ENCODE measurements at regions of chr12 and their contacts with region 1.

Region 1: GRCh38 chr12:12384571-12385340 is 27.9 kb downstream of the BORCS5 start:
- DNase-seq: peak; percentile 76
- ATAC-seq: peak; percentile 88
- H3K4me3 Mint-ChIP-seq: no peak overlapping the region
- H3K27ac Mint-ChIP-seq: peak overlapping the region; percentile 77
- H3K4me1 Mint-ChIP-seq: peaks cover 46% of the 10 kb centered on the region
- H3K27me3 Mint-ChIP-seq: no peaks in the 10 kb centered on the region

Region 2: DNA sequence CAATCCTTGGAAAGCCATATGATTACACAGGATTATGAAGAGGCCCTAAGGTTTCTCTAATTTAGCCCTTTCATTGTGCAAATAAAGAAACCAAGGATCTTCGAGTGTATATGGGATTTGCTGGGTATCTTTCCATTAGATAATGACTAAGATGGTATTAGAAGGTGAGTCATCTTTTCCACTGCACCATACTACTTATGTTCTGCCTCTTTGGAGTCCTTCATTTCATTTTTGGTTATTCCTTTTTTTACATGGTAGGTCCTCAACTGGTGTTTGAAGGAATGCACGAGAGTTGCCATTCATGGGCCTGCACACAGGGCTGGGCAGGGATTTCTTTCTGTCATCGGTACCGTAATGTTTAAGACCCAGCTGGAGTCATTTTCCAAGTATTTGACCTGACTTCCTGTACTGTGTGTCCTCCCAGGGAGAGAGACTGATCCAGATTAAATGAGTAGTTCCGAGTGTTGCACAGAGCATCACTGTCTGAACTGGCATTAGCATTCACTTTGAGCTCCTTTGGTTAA is 57.9 kb after region 1 on chr12:
- CTCF ChIA-PET with region 1: no interaction called
- POLR2A ChIA-PET with region 1: interaction called, 4 read pairs
- intact Hi-C with region 1: loop called in 1 of 2 experiments (anchors 10 kb)
- DNase-seq: no peak
- ATAC-seq: peak; percentile 16
- H3K4me3 Mint-ChIP-seq: peak overlapping the region; percentile 46
- H3K27ac Mint-ChIP-seq: peak overlapping the region; percentile 98
- H3K4me1 Mint-ChIP-seq: peaks cover 81% of the 10 kb centered on the region
- H3K27me3 Mint-ChIP-seq: no peaks in the 10 kb centered on the region